ENCODE measurements at regions of chr1 and their contacts with region 1.

Region 1: DNA sequence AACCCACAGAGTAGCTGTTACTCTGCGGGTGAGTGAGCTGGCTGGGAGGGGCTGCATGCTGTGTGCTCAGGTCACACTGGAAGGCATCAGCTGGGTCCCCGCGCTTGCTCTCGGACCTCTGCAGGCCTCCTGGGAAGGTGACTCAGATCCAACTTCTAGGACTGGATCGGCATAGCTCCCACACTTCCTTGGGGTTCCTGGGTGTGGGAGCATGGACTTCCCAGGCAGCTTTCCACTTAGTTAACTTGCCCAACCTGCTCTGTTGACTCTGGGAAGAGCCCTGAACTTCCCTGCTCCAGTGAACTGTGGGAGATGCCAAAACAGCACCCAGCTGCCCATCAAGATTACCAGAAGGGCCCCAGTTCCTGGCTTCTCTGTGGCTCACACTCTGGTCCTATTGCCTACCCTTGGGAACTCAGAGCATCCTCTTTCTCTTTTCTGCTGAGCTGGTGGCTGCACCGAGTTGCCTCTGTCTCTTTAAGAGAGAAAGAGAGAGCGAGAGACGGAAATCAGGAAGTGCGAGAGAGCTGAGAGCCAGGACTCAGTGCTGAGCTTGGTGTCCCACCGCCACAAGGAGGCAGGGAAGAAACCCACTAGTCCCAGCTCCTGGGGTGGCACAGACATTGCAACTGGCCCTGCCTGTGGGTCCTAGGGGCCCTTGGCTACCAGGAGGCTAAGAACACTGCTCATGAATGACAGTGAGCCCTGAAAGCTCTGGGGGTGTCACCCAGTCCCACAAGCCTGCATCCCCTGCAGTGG is at the start of gene IKBKE:
- DNase-seq: peak; percentile 63
- H3K4me3 Mint-ChIP-seq: peak within 1 kb of the TSS; percentile 98
- H3K27ac Mint-ChIP-seq: peak within 1 kb of the TSS; percentile 94
- H3K4me1 Mint-ChIP-seq: peaks cover 87% of the 10 kb centered on the region
- H3K27me3 Mint-ChIP-seq: no peaks in the 10 kb centered on the region
- total RNA-seq, gene IKBKE: 59.8 and 64.9 TPM in 2 replicates

Region 2: DNA sequence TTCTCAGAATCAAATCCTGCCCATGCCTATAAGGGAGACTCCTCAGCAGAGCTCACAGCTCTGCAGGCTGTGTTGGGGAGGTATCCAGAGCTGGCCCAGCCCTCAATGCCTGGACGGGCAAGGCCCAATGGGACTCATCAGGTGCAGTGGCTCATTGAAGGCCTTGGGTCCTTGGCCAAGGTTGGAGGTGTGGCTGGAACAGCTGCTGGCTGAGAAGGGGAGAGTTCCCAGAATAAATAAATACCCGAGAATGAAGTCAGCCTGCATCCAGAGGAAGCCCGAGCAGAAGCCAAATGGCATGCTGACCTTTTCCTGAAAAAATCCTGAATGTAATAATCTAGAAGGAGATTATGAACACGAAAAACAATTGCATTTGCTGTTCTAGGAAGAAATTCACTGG is 25.0 kb before region 1 on chr1:
- intact Hi-C with region 1: no loop called
- DNase-seq: no peak
- H3K4me3 Mint-ChIP-seq: no peak overlapping the region
- H3K27ac Mint-ChIP-seq: no peak overlapping the region
- H3K4me1 Mint-ChIP-seq: peaks cover 20% of the 10 kb centered on the region
- H3K27me3 Mint-ChIP-seq: no peaks in the 10 kb centered on the region

Region 3: GRCh38 chr1:206507284-206508129 is 37.4 kb after region 1 on chr1 and contains the start of gene RASSF5:
- intact Hi-C with region 1: loop called (anchors 2 kb)
- DNase-seq: peak; percentile 82
- H3K4me3 Mint-ChIP-seq: peak within 1 kb of the TSS; percentile 78
- H3K27ac Mint-ChIP-seq: peak within 1 kb of the TSS; percentile 47
- H3K4me1 Mint-ChIP-seq: peaks cover 54% of the 10 kb centered on the region
- H3K27me3 Mint-ChIP-seq: peaks cover 17% of the 10 kb centered on the region
- total RNA-seq, gene RASSF5: 220 and 221 TPM in 2 replicates

Region 4: DNA sequence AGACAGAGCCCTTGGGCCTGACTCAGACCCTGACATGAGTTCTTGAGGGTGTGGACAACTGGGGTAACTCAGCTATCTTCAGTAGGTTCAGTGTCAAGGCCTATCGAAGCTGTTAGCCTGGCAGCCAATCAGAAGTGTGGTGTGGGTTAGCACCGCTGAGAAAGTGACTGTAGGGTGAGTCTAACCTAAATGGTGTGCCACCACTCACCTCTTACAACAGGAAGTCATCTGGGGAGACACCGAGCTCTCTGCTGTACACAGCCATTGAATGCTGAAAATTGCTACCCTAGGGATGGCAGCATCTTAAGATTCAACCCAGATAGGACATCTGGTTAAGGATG is 81.8 kb after region 1 on chr1:
- intact Hi-C with region 1: loop called (anchors 1 kb)
- DNase-seq: peak; percentile 69
- H3K4me3 Mint-ChIP-seq: peak overlapping the region; percentile 80
- H3K27ac Mint-ChIP-seq: peak overlapping the region; percentile 93
- H3K4me1 Mint-ChIP-seq: peaks cover 78% of the 10 kb centered on the region
- H3K27me3 Mint-ChIP-seq: peaks cover 2% of the 10 kb centered on the region

Region 5: DNA sequence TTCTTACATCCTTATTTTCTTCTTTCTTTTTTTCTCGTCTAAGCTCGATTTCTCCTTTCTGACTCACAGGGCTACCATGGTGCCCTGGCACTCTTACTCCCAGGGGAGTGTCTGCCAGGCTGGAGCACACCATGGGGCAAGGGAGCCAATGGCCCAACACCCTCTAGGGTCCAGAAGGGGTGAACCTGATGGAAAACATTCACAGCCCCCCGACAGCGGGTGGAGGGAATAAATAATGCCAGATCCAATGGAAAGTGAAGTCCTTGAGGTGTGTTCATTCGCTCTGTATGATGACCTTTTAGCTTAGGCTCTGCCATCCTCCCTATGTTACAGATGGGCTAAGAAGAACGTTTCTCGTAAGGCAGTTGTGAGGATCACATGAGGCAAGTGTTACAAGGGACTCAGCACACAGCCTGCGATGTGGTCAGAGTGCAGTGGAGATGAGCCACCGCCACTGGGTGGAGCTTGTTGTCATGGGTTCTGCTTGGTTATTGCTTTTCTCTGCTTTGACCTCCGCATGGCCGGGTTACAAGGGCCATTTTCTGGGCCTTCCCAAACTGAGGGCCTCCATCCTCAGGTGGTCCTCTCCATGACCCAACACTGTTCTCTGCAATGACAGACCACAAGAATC is 455.1 kb after region 1 on chr1:
- intact Hi-C with region 1: loop called (anchors 10 kb)
- DNase-seq: peak; percentile 36
- H3K4me3 Mint-ChIP-seq: no peak overlapping the region
- H3K27ac Mint-ChIP-seq: no peak overlapping the region
- H3K4me1 Mint-ChIP-seq: peaks cover 13% of the 10 kb centered on the region
- H3K27me3 Mint-ChIP-seq: no peaks in the 10 kb centered on the region

Measured in activated T-helper 1 cell treated with anti-CD3 and anti-CD28 coated beads, Interleukin-12 subunit alpha, Interleukin-12 subunit beta, Interleukin-2, Interleukin-4 antibody, amounts not matched to agents 30 ng/mL and 10 ng/mL and 1 ng/mL, durations not matched to agents 14 hours and 24 hours and 36 hours (primary cell).